ENCODE measurements at regions of chr17 and their contacts with region 1.

Region 1: DNA sequence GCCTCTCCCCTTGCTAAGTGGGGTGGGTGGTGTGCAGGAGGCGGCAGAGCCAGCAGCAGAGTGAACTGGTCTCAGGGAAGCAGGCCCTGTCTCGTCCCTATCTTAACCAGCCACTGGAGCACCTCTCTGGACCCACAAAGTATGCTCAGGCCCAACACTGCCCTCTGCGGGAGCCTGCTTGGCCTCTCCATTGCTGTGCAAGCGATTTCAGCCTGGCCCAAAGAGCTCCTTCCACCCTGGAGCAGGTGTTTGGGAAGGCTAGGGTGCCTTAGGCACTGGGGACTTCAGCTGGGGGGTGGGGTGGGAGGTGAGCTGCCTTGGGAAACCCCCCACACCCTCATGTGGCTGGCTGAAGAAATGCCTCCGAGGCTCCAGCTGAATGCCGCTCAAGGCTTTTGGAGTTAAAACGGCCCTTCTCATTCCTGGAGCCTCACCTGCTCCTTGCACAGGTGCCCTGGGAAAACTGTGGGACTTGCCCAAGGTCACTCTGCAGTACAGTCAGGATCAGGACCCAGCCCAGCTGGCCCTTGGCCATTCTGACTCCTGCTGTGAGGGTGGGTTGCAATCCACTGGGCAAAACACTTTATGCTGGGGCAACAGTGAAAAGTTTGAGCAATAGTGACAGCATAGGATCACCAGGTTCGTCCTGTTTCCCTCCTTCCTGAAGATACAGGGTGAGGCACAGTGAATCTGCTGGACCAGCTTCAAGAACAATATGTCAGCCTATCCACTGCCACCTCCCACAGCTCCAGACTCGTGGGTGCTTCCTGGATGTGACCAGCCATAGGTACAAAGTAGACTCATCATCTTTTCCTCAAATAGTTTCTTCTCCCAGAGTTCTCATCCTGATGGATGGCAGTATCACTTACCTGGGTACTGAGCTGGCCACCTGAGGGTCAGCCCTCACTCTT is 5.9 kb upstream of the UBE2O start:
- DNase-seq: peak; percentile 87
- ATAC-seq: peak; percentile 94
- H3K4me3 Mint-ChIP-seq: no peak overlapping the region
- H3K27ac Mint-ChIP-seq: no peak overlapping the region
- H3K4me1 Mint-ChIP-seq: peaks cover 14% of the 10 kb centered on the region
- H3K27me3 Mint-ChIP-seq: peaks cover 2% of the 10 kb centered on the region; the same call in 1 of the 2 replicates
- CTCF ChIP-seq: no peak

Region 2: GRCh38 chr17:76370261-76370993 is 88.4 kb before region 1 on chr17:
- CTCF ChIA-PET with region 1: interaction called, 13 read pairs
- POLR2A ChIA-PET with region 1: no interaction called
- DNase-seq: no peak
- ATAC-seq: peak; percentile 13; the same call in 1 of the 2 replicates
- H3K4me3 Mint-ChIP-seq: no peak overlapping the region
- H3K27ac Mint-ChIP-seq: peak overlapping the region; percentile 7; the same call in 1 of the 2 replicates
- H3K4me1 Mint-ChIP-seq: peaks cover 22% of the 10 kb centered on the region
- H3K27me3 Mint-ChIP-seq: no peaks in the 10 kb centered on the region; the same call in 1 of the 2 replicates
- CTCF ChIP-seq: no peak

Region 3: DNA sequence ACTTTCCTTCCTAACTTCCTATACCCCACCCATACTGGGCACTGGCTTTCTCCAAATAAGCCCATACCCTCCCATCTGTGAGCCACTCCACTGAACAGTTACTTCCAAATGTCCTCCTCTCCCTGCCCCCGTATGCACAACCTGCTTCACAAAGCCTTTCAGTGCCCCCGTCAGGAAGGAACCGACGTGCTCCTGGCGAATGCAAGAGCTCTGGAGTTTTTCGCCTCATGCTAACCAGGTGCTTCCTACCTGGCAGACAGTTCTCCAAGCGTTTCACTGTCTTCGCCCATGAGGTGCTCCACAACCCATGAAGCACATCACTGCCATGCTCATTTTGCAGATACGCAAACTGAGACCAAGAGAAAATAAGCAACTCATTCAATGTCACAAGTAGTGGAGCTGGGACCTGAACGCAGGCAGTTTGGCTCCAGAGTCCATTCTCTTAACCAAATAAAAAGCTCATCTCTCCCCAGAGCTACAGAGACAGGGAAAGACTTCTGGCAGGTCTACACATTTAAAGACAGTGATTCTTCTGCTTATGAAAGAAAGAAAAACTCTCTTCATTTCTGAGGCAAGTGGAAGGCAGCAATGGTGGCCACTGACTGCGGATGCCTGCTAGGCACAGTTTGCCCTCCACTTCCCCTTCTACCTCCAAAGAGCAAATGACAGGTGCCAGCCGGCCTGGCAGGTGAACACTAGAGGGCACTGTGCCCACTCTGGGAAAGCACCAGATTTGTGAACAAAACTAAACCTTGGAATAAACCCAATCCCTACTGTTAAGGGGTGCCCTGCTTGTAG is 50.6 kb before region 1 on chr17:
- CTCF ChIA-PET with region 1: interaction called, 68 read pairs
- POLR2A ChIA-PET with region 1: no interaction called
- DNase-seq: peak; percentile 82
- ATAC-seq: peak; percentile 76
- H3K4me3 Mint-ChIP-seq: no peak overlapping the region
- H3K27ac Mint-ChIP-seq: no peak overlapping the region; the same call in 1 of the 2 replicates
- H3K4me1 Mint-ChIP-seq: peaks cover 11% of the 10 kb centered on the region; the same call in 1 of the 2 replicates
- H3K27me3 Mint-ChIP-seq: no peaks in the 10 kb centered on the region
- CTCF ChIP-seq: peak; percentile 59; the same call in 1 of the 2 replicates

Region 4: DNA sequence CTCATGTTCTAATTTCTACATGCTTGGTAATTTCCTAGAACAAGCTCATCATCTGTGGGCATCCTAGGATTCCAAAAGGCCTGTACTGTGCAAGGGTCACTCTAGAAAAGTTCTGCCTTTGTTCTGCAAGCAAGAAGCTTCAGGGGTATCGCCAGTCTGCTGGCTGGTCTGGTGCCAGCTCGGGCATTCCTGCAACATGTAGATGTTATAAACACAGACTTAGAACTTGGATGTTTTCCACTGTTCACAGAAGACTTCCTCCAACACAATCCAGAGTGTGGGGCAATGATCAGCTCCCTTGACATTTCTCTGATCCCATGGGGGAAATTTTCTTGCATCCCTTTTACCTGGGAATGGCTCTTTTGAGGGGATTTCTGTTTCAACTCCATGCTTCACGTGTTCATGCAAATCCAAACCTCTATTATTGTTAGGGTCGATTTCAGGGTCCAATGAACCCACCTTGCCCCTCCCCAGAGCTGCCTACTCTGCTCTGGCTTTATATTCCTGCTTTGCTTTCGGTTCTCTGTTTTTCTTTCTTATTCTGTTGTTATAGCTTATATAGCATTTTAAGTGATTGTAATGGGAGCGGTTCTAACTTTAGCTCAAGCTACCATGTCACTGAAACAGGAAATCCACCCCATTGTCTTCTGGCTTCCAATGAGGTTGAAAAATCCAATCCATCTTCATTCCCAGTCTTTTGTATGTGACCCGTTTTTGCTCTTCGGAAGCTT is 31.2 kb before region 1 on chr17:
- CTCF ChIA-PET with region 1: interaction called, 14 read pairs
- POLR2A ChIA-PET with region 1: no interaction called
- DNase-seq: no peak
- ATAC-seq: no peak
- H3K4me3 Mint-ChIP-seq: no peak overlapping the region
- H3K27ac Mint-ChIP-seq: peak overlapping the region; percentile 4; the same call in 1 of the 2 replicates
- H3K4me1 Mint-ChIP-seq: peaks cover 57% of the 10 kb centered on the region
- H3K27me3 Mint-ChIP-seq: no peaks in the 10 kb centered on the region
- CTCF ChIP-seq: no peak

Region 5: GRCh38 chr17:76492989-76493501 is 34.2 kb after region 1 on chr17:
- CTCF ChIA-PET with region 1: interaction called, 30 read pairs
- POLR2A ChIA-PET with region 1: interaction called, 3 read pairs
- DNase-seq: no peak
- ATAC-seq: no peak; the same call in 1 of the 2 replicates
- H3K4me3 Mint-ChIP-seq: no peak overlapping the region
- H3K27ac Mint-ChIP-seq: peak overlapping the region; percentile 78; the same call in 1 of the 2 replicates
- H3K4me1 Mint-ChIP-seq: peaks cover 25% of the 10 kb centered on the region
- H3K27me3 Mint-ChIP-seq: no peaks in the 10 kb centered on the region
- CTCF ChIP-seq: no peak

Region 6: DNA sequence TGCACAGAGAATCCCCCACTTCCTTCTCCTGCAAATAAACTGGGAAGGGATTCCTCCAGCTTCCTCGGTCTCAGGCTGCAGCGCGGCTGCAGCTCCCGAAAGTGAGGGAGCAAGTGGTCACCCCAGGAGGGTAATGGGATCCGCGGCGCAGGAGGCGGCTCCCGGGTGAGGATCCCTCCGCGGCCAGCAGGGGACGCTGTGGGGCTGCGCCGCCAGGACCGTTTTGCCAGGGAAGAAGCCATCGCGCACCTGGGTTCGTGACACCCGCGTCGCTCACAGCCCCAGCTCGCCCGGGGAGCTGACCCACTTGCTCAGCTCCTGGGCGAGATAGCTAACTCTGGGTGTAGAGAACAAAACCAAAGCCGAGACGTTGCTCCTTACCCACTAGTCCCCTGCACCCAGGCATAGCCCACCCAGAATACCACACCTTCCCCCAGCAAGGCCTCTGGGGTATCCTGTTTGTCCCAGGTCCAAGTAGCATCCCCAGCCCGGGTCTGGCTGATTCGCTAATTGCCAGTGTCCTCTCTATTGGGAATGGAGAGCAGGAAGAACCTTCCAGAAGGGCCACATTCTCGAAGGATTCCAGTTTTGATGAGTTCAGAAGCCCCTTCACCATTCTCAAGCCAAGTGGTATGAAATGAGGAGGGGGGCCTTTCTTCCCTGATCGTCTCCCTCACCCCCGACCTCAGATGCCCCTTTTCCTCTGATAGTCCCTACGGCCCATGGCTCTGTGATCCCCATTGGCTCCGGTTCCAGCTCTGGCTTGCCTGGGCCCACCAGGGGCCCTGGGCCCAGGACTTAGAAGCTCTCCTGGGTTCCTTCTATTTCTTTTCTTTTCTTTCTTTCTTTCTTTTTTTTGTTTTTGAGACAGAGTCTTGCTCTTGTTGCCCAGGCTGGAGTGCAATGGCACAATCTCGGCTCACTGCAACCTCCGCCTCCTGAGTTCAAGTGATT is 64.5 kb after region 1 on chr17:
- CTCF ChIA-PET with region 1: interaction called, 12 read pairs
- POLR2A ChIA-PET with region 1: no interaction called
- DNase-seq: peak; percentile 88
- ATAC-seq: peak; percentile 79
- H3K4me3 Mint-ChIP-seq: peak overlapping the region; percentile 29; the same call in 1 of the 2 replicates
- H3K27ac Mint-ChIP-seq: no peak overlapping the region
- H3K4me1 Mint-ChIP-seq: peaks cover 21% of the 10 kb centered on the region
- H3K27me3 Mint-ChIP-seq: peaks cover 24% of the 10 kb centered on the region
- CTCF ChIP-seq: peak; percentile 99

Region 7: DNA sequence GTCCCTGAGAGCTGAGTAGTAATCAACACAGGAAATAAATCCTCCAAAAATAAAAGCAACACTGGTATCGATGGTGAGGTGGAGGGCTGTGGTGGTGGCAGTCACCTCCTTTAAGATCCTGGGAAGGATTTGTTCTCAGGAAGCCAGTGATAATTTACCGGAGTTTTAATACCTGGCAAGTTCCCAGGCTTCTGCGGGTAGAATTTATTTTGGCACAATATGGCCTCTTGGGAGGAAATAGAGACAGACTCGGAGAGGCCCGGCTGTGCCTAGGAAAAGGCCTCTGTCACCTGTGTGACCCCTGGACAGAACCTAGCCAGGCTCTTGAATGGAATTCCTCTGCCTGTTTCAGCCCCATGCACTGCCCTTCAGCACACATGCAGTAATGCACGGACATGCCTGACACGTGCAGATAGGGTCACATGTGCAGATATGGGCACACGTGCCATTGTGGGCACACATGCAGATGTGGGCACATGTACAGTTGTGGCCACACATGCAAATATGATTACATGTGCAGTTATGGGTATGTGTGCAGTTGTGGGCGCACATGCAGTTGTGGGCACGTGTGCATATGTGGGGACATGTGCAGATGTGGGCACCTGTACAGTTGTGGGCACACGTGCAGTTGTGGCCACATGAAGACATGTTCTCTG is 442.8 kb after region 1 on chr17:
- CTCF ChIA-PET with region 1: no interaction called
- POLR2A ChIA-PET with region 1: no interaction called
- DNase-seq: no peak
- ATAC-seq: no peak
- H3K4me3 Mint-ChIP-seq: no peak overlapping the region
- H3K27ac Mint-ChIP-seq: no peak overlapping the region
- H3K4me1 Mint-ChIP-seq: peaks cover 9% of the 10 kb centered on the region
- H3K27me3 Mint-ChIP-seq: no peaks in the 10 kb centered on the region; the same call in 1 of the 2 replicates
- CTCF ChIP-seq: no peak

Measured in WTC11 (cell line).